Gastrocnemius medialis (tissue), 4 donors: ENCODE measurements at regions of chr19 and their contacts with region 1.

Region 1: DNA sequence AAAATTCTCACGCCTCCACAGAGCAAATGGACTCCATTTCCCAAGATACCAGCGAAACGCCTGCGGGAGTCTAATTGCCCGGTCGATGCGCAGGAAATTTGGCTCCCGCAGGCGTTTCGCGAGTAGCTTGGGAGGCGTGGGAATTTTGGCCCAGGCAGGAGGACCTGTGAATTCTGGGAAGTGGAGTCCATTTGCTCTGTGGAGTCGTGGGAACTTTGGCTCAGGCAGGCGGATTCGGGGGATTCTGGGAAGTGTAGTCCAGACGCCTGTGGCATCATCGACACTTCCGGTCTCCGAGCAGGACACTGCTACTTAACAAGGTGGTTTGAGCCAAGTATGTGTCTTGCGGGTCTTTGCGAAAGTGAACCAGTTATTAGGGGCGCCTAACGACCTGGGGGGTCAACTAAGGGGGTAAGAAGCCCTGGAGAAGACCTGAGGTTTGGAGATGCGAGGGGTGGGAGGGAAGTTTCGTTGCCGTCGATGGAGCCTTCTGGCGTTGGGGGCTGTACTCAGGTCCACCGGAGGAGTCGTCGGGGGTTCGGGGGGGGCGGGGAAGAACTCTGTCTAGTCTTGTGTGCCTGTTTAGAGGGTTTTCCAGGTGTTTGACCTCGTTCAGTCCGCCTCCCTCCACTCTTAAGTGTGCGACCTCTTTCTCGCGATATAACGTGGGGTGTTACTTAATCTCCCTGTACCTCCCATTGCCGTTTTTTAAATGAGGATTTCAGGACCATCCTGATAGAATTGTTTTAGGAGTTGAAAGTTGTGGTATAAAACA is at the start of gene ZNF155:
- DNase-seq: peak; percentile 90 to 94
- ATAC-seq: peak; percentile 100
- H3K4me3 ChIP-seq: peak within 1 kb of the TSS; percentile 63 to 85 (median 76)
- H3K27ac ChIP-seq: peak within 1 kb of the TSS; percentile 77 to 83 (median 80)
- H3K4me1 ChIP-seq: peaks cover 0 to 5% of the 10 kb centered on the region in 2 donors
- H3K27me3 ChIP-seq: no peaks in the 10 kb centered on the region
- CTCF ChIP-seq: no peak
- POLR2A ChIP-seq: no peak
- total RNA-seq, gene ZNF155: 0.97 to 2.0 (median 1.6) TPM

Region 2: DNA sequence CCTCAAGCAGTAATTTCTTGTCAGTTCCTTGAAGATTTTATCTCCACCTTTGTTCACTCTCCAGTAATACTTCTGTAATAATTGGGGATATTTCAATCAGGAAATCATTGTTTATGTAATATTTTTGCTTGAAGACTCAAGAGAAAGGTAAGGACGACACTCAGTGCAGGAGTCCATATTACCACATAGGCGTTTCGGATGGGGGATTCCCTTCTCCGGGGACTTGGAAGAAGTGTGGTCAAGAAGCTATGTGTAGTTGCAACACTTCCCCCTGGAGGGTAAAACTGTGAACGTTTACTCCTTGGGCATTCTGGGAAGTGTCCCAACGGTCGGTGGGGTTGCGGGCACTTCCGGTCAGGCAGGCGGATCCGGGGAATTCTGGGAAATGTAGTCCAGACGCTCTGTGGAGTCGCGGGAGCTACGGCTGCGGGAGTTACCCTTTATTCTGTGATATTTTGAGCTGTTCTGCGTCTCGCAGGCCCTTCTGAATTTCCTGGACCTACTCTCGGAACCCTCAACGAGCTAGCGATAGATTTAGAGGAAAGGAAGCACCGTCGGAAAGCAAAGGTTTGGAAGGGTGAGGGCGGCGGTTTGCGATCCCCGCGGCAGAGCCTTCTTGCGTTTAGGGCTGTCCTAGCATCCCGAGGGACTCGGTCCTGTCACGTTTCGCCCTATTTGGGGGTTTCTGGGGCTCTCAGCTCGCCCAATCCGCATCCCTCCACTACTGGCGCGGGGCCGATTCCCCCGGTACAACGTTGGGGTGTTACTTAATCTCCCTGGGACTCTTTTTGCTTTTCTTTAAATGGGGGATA is 33.1 kb before region 1 on chr19 and contains the start of gene ZNF221:
- in situ Hi-C with region 1: no loop called
- intact Hi-C with region 1: loop called (anchors 1 kb)
- DNase-seq: peak; percentile 87 to 90
- ATAC-seq: peak; percentile 100
- H3K4me3 ChIP-seq: peak within 1 kb of the TSS; percentile 70 to 97 (median 84)
- H3K27ac ChIP-seq: peak within 1 kb of the TSS; percentile 66 to 80 (median 74)
- H3K4me1 ChIP-seq: peaks cover 0 to 3% of the 10 kb centered on the region in 2 donors
- H3K27me3 ChIP-seq: no peaks in the 10 kb centered on the region
- CTCF ChIP-seq: peak in 4 of 5 experiments; percentile 19 to 48 (median 38)
- POLR2A ChIP-seq: no peak
- total RNA-seq, gene ZNF221: 0.76 to 15.3 (median 0.96) TPM

Region 3: GRCh38 chr19:44025217-44025936 is 41.3 kb after region 1 on chr19 and contains the start of gene ZNF222:
- in situ Hi-C with region 1: no loop called
- intact Hi-C with region 1: loop called (anchors 1 kb)
- DNase-seq: peak; percentile 63 to 67
- ATAC-seq: peak; percentile 91 to 96
- H3K4me3 ChIP-seq: peak within 1 kb of the TSS; percentile 62 to 86 (median 78)
- H3K27ac ChIP-seq: peak within 1 kb of the TSS; percentile 58 to 71 (median 63)
- H3K4me1 ChIP-seq: no peaks in the 10 kb centered on the region
- H3K27me3 ChIP-seq: no peaks in the 10 kb centered on the region
- CTCF ChIP-seq: no peak
- POLR2A ChIP-seq: no peak
- total RNA-seq, gene ZNF222: 0.56 to 1.6 (median 1.1) TPM

Region 4: GRCh38 chr19:44071824-44072542 is 87.9 kb after region 1 on chr19 and contains the start of gene ZNF284:
- in situ Hi-C with region 1: no loop called
- intact Hi-C with region 1: loop called (anchors 1 kb)
- DNase-seq: peak; percentile 82 to 87
- ATAC-seq: peak; percentile 100
- H3K4me3 ChIP-seq: peak within 1 kb of the TSS; percentile 60 to 83 (median 77)
- H3K27ac ChIP-seq: peak within 1 kb of the TSS; percentile 56 to 79 (median 59)
- H3K4me1 ChIP-seq: peaks cover 10 to 13% of the 10 kb centered on the region in 2 donors
- H3K27me3 ChIP-seq: no peaks in the 10 kb centered on the region
- CTCF ChIP-seq: no peak
- POLR2A ChIP-seq: peak in 1 of 2 donors; percentile 20
- total RNA-seq, gene ZNF284: 0.38 to 1.3 (median 0.63) TPM

Region 5: GRCh38 chr19:44093931-44094765 is 110.0 kb after region 1 on chr19 and contains the start of gene ZNF224:
- in situ Hi-C with region 1: no loop called
- intact Hi-C with region 1: loop called (anchors 1 kb)
- DNase-seq: peak; percentile 85 to 87
- ATAC-seq: peak; percentile 100
- H3K4me3 ChIP-seq: peak within 1 kb of the TSS; percentile 76 to 91 (median 80)
- H3K27ac ChIP-seq: peak within 1 kb of the TSS; percentile 70 to 82 (median 73)
- H3K4me1 ChIP-seq: peaks cover 7 to 10% of the 10 kb centered on the region in 2 donors
- H3K27me3 ChIP-seq: no peaks in the 10 kb centered on the region
- CTCF ChIP-seq: no peak
- POLR2A ChIP-seq: peak in 1 of 2 donors; percentile 41
- total RNA-seq, gene ZNF224: 4.9 to 14.1 (median 6.9) TPM

Region 6: GRCh38 chr19:44207126-44207803 is 223.2 kb after region 1 on chr19:
- in situ Hi-C with region 1: no loop called
- intact Hi-C with region 1: loop called (anchors 5 kb)
- DNase-seq: peak; percentile 75 to 84
- ATAC-seq: peak; percentile 91 to 92
- H3K4me3 ChIP-seq: peak overlapping the region; percentile 58 to 88 (median 78)
- H3K27ac ChIP-seq: peak overlapping the region; percentile 79 to 87 (median 82)
- H3K4me1 ChIP-seq: peaks cover 4 to 7% of the 10 kb centered on the region in 2 donors
- H3K27me3 ChIP-seq: no peaks in the 10 kb centered on the region
- CTCF ChIP-seq: no peak
- POLR2A ChIP-seq: peak in 1 of 2 donors; percentile 28

Region 7: GRCh38 chr19:44332145-44332544 is 348.0 kb after region 1 on chr19:
- in situ Hi-C with region 1: no loop called
- intact Hi-C with region 1: no loop called
- DNase-seq: no peak
- ATAC-seq: no peak
- H3K4me3 ChIP-seq: no peak overlapping the region
- H3K27ac ChIP-seq: no peak overlapping the region
- H3K4me1 ChIP-seq: no peaks in the 10 kb centered on the region
- H3K27me3 ChIP-seq: no peaks in the 10 kb centered on the region
- CTCF ChIP-seq: no peak
- POLR2A ChIP-seq: no peak

Region 8: GRCh38 chr19:44356383-44357111 is 372.4 kb after region 1 on chr19 and contains the start of gene ZNF112:
- in situ Hi-C with region 1: no loop called
- intact Hi-C with region 1: loop called (anchors 1 kb)
- DNase-seq: peak; percentile 85 to 88
- ATAC-seq: peak; percentile 100
- H3K4me3 ChIP-seq: peak within 1 kb of the TSS; percentile 51 to 74 (median 65)
- H3K27ac ChIP-seq: peak within 1 kb of the TSS; percentile 46 to 68 (median 58)
- H3K4me1 ChIP-seq: peaks cover 8 to 9% of the 10 kb centered on the region in 2 donors
- H3K27me3 ChIP-seq: no peaks in the 10 kb centered on the region
- CTCF ChIP-seq: no peak
- POLR2A ChIP-seq: no peak
- total RNA-seq, gene ZNF112: 0.78 to 4.0 (median 1.6) TPM